Activated CD4-positive, alpha-beta memory T cell treated with anti-CD3 and anti-CD28 coated beads, Interleukin-2, amount 10 ng/mL, durations not matched to agents 7 days and 5 days (primary cell): ENCODE measurements at regions of chr6 and their contacts with region 1.

Region 1: GRCh38 chr6:75208298-75209183 is 2.7 kb upstream of the COL12A1 start:
- DNase-seq: peak; percentile 83
- H3K4me3 Mint-ChIP-seq: peak overlapping the region; percentile 30
- H3K27ac Mint-ChIP-seq: no peak overlapping the region
- H3K4me1 Mint-ChIP-seq: peaks cover 48% of the 10 kb centered on the region
- H3K27me3 Mint-ChIP-seq: peaks cover 69% of the 10 kb centered on the region

Region 2: DNA sequence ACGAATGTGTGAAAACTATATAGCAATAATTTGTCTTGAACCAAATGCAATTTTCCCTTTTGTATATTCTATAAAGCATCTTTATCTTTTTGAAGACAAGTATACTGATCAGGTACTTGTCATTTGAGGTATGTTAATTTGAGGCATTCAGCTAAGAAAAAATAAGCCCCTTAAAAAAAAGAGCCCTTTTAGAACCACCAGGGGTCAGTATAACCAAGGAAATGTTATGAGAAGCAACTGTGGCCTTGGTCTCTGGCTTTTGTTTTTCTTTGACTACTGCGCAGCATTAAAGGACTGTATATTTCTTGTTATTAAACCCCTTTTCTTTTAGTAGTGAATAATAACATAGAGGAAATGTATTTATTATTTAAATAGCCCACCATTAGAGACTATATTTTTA is 1469.4 kb before region 1 on chr6:
- CTCF ChIA-PET with region 1: interaction called, 19 read pairs
- POLR2A ChIA-PET with region 1: no interaction called
- DNase-seq: no peak
- H3K4me3 Mint-ChIP-seq: no peak overlapping the region
- H3K27ac Mint-ChIP-seq: no peak overlapping the region
- H3K4me1 Mint-ChIP-seq: no peaks in the 10 kb centered on the region
- H3K27me3 Mint-ChIP-seq: no peaks in the 10 kb centered on the region

Region 3: DNA sequence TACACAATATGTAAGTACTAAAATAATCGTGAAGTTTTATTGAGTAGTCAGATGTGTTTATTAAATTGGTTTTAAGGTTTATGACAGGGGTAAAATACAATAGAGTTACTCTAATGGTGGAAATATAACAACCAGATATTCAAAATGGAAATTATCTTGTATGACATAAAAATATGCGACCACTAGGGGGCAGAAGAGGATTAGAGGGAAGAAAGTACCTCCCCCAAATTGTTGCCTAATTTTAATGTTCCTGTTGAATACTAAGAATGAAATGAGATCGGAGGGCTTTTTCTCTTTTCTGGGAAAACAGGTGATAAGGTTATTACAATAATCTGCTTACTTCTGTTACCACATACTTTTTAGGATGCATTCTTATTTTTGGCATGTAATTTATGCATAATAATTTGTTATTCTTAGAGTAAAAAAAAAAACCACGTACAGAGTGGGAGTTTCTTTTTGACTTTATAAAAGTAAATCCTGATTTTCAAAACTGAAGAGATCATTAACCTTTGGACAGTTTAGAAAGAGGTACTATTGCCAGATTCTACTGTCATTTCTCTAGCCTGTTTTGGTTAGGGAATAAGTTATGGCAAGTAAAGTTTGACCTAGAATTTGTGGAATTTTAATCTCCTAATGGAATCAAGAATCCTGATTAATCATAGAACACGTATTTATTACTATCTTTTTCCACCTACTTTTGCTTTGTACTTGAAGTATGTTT is 1353.4 kb before region 1 on chr6:
- CTCF ChIA-PET with region 1: interaction called, 10 read pairs
- POLR2A ChIA-PET with region 1: no interaction called
- DNase-seq: no peak
- H3K4me3 Mint-ChIP-seq: no peak overlapping the region
- H3K27ac Mint-ChIP-seq: no peak overlapping the region
- H3K4me1 Mint-ChIP-seq: no peaks in the 10 kb centered on the region
- H3K27me3 Mint-ChIP-seq: no peaks in the 10 kb centered on the region

Region 4: GRCh38 chr6:74091136-74091793 is 1117.3 kb before region 1 on chr6:
- CTCF ChIA-PET with region 1: interaction called, 53 read pairs
- POLR2A ChIA-PET with region 1: no interaction called
- DNase-seq: no peak
- H3K4me3 Mint-ChIP-seq: no peak overlapping the region
- H3K27ac Mint-ChIP-seq: no peak overlapping the region
- H3K4me1 Mint-ChIP-seq: no peaks in the 10 kb centered on the region
- H3K27me3 Mint-ChIP-seq: no peaks in the 10 kb centered on the region

Region 5: GRCh38 chr6:75223428-75223827 is 14.9 kb after region 1 on chr6:
- CTCF ChIA-PET with region 1: interaction called, 47 read pairs
- POLR2A ChIA-PET with region 1: no interaction called
- DNase-seq: no peak
- H3K4me3 Mint-ChIP-seq: no peak overlapping the region
- H3K27ac Mint-ChIP-seq: no peak overlapping the region
- H3K4me1 Mint-ChIP-seq: no peaks in the 10 kb centered on the region
- H3K27me3 Mint-ChIP-seq: peaks cover 13% of the 10 kb centered on the region